PC-9 (cell line): ENCODE measurements at regions of chr14 and their contacts with region 1.

Region 1: GRCh38 chr14:68862954-68863594 is 70.2 kb upstream of the ZFP36L1 start:
- DNase-seq: peak; percentile 66 to 81
- H3K4me3 ChIP-seq: no peak overlapping the region
- H3K27ac ChIP-seq: no peak overlapping the region
- H3K4me1 ChIP-seq: peaks cover 5% of the 10 kb centered on the region; the same call in 1 of the 2 replicates
- H3K27me3 ChIP-seq: no peaks in the 10 kb centered on the region
- CTCF ChIP-seq: peak; percentile 86

Region 2: GRCh38 chr14:67850066-67850830 is 1012.8 kb before region 1 on chr14:
- CTCF ChIA-PET with region 1: interaction called, 20 read pairs
- POLR2A ChIA-PET with region 1: no interaction called
- intact Hi-C with region 1: no loop called
- DNase-seq: no peak
- H3K4me3 ChIP-seq: no peak overlapping the region
- H3K27ac ChIP-seq: no peak overlapping the region
- H3K4me1 ChIP-seq: no peaks in the 10 kb centered on the region
- H3K27me3 ChIP-seq: no peaks in the 10 kb centered on the region
- CTCF ChIP-seq: no peak

Region 3: DNA sequence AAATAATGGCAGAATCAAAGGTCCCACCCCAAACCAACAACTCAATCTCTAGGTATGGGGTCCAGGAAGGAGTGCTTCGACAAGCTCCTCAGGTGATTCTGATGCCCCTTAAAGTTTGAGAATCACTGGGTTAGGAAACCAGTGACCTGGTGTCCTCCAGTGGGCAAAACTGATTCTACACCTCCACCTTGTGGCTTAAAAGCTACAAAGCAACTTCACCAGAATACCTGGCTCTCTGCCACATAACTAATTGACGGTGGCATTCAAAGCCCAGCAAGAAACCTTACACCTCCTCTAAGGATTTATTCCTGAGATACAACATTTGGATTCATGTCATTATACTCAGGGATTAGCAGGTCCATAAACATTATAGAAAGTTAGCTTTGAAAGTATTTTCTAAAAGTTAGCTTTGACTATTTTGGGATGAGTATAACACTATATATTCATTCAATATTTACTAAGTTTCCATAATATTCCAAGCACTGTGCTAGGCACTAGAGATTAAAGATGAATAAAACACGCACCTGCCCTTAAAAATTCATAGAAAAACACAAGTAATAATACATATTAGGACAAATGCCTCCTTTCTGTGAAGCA is 244.4 kb after region 1 on chr14:
- CTCF ChIA-PET with region 1: interaction called, 3 read pairs
- POLR2A ChIA-PET with region 1: interaction called, 3 read pairs
- intact Hi-C with region 1: loop called (anchors 1 kb)
- DNase-seq: peak; percentile 62 to 68
- H3K4me3 ChIP-seq: no peak overlapping the region
- H3K27ac ChIP-seq: no peak overlapping the region
- H3K4me1 ChIP-seq: no peaks in the 10 kb centered on the region
- H3K27me3 ChIP-seq: no peaks in the 10 kb centered on the region
- CTCF ChIP-seq: peak; percentile 90

Region 4: GRCh38 chr14:69460093-69460701 is 597.1 kb after region 1 on chr14:
- CTCF ChIA-PET with region 1: no interaction called
- POLR2A ChIA-PET with region 1: no interaction called
- intact Hi-C with region 1: loop called (anchors 5 kb)
- DNase-seq: peak; percentile 69 to 82
- H3K4me3 ChIP-seq: no peak overlapping the region
- H3K27ac ChIP-seq: no peak overlapping the region
- H3K4me1 ChIP-seq: no peaks in the 10 kb centered on the region
- H3K27me3 ChIP-seq: no peaks in the 10 kb centered on the region
- CTCF ChIP-seq: peak; percentile 91